Naive thymus-derived CD8-positive, alpha-beta T cell (primary cell): ENCODE measurements at regions of chr1 and their contacts with region 1.

Region 1: GRCh38 chr1:9629445-9630201 is 21.9 kb upstream of the PIK3CD start:
- DNase-seq: peak; percentile 66 to 89 (median 80)
- ATAC-seq: peak; percentile 45 to 58
- H3K4me3 Mint-ChIP-seq: peak overlapping the region; percentile 90 to 100 (median 96)
- H3K27ac Mint-ChIP-seq: peak overlapping the region; percentile 91 to 100 (median 97)
- H3K4me1 Mint-ChIP-seq: peaks cover 25 to 78% (median 60%) of the 10 kb centered on the region in 4 donors
- H3K27me3 Mint-ChIP-seq: no peaks in the 10 kb centered on the region

Region 2: GRCh38 chr1:9606948-9607347 is 22.7 kb before region 1 on chr1:
- POLR2A ChIA-PET with region 1: no interaction called
- DNase-seq: no peak
- ATAC-seq: no peak
- H3K4me3 Mint-ChIP-seq: no peak overlapping the region
- H3K27ac Mint-ChIP-seq: no peak overlapping the region
- H3K4me1 Mint-ChIP-seq: no peaks in the 10 kb centered on the region
- H3K27me3 Mint-ChIP-seq: no peaks in the 10 kb centered on the region

Region 3: GRCh38 chr1:9651565-9652378 is 22.1 kb after region 1 on chr1 and contains the start of gene PIK3CD:
- POLR2A ChIA-PET with region 1: interaction called, 1,921 read pairs
- DNase-seq: peak in 8 of 10 donors; percentile 23 to 52 (median 36)
- ATAC-seq: peak; percentile 24 to 44
- H3K4me3 Mint-ChIP-seq: peak within 1 kb of the TSS; percentile 95 to 100 (median 100)
- H3K27ac Mint-ChIP-seq: peak within 1 kb of the TSS; percentile 97 to 100 (median 99)
- H3K4me1 Mint-ChIP-seq: peaks cover 24 to 82% (median 79%) of the 10 kb centered on the region in 4 donors
- H3K27me3 Mint-ChIP-seq: no peaks in the 10 kb centered on the region
- polyA plus RNA-seq, gene PIK3CD: 56.8 to 166 (median 87.4) TPM

Region 4: DNA sequence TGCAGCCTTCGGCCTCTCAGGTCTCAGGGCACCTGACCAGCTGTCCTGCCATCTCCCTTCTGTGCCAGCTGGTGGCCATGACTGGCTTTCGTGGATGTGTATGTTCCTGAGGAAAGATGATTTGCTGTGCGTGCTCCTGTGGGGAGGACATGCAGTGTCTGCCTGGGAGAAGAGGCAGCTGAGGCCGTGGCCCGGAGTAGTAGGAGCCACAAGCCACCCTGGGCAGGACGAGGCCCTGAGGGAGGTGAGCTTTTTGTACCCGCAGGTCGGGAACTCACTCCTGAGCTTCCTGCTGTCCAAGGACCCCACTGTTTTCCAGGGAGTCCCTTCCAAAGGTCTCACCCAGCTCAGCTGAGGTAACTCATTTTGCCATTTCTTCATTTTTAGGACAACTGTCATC is 80.4 kb after region 1 on chr1:
- POLR2A ChIA-PET with region 1: interaction called, 1,172 read pairs
- DNase-seq: no peak
- ATAC-seq: no peak
- H3K4me3 Mint-ChIP-seq: peak overlapping the region in 5 of 10 donors; percentile 5 to 77 (median 45)
- H3K27ac Mint-ChIP-seq: peak overlapping the region; percentile 49 to 91 (median 86)
- H3K4me1 Mint-ChIP-seq: peaks cover 16 to 77% (median 69%) of the 10 kb centered on the region in 4 donors
- H3K27me3 Mint-ChIP-seq: no peaks in the 10 kb centered on the region

Region 5: DNA sequence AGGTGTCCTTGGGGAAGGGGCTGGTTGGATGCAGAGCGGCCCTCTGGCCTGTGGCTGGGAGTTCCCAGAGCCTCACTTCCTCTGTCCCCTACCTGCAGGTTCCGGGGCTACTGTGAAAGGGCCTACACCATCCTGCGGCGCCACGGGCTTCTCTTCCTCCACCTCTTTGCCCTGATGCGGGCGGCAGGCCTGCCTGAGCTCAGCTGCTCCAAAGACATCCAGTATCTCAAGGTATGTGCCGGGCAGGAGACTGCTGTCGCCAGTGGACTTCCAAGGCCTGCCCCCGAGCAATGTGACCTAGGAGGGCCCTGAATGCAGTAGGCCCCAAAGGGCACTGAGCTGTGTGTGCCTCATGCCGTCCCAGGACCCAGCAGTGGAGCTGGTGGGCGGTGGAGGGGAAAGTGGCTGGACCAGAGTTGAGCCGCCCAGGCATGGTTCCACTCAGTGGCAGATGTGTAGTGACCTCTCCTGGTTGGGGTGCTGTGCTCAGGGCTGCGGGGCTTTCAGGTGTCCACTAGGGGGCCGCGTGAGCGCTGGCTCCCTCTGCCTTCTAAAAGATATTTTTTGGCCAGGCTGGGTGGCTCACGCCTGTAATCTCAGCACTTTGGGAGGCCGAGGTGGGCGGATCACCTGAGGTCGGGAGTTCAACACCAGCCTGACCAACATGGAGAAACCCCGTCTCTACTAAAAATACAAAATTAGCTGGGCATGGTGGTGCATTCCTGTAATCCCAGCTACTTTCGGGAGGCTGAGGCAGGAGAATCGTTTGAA is 95.3 kb after region 1 on chr1:
- POLR2A ChIA-PET with region 1: interaction called, 1,172 read pairs
- DNase-seq: peak; percentile 49 to 82 (median 68)
- ATAC-seq: peak; percentile 13 to 16
- H3K4me3 Mint-ChIP-seq: peak overlapping the region in 7 of 10 donors; percentile 10 to 83 (median 53)
- H3K27ac Mint-ChIP-seq: peak overlapping the region; percentile 62 to 92 (median 84)
- H3K4me1 Mint-ChIP-seq: peaks cover 27 to 85% (median 71%) of the 10 kb centered on the region in 4 donors
- H3K27me3 Mint-ChIP-seq: no peaks in the 10 kb centered on the region

Region 6: DNA sequence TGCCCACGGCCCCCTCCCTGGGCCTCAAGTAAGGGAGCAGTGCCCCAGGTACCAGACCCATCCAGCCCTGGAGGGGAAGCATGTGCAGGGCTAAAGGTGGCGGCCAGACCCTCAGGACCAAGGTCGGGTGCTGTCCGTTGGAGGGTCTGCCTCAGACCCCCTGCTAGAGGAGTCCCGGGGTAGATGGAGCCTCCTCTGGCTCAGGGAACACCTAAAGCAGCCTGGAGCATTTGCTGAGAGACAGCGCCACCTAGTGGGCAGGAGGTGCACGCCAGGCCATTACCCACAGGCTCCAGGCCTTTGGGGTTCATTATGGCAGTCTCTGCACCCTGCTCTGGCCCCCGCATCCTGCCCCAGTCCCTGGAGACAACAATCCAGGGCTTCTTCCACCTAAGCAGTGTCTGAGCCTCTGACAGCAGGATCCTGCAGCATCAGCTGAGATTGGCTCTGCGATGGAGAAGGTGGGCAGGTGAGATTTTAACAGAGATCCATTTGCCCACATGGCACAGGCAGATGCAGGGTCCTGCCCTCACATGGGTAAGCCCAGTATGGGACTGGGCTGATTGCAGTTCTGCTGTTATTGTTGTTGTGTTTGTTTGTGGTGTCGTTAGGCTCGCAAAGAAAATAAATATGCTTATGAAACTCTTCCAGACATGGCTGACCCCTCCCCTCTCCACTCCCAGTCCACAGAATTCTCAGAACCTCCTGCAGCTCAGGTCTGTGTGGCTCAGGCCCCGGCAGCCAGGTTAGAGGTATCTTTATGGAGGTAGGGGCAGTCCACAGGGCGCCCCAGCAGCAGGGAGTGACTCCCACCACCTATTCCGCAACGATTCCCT is 238.0 kb after region 1 on chr1:
- POLR2A ChIA-PET with region 1: interaction called, 11 read pairs
- DNase-seq: peak; percentile 72 to 92 (median 86)
- ATAC-seq: peak; percentile 99 to 100
- H3K4me3 Mint-ChIP-seq: no peak overlapping the region
- H3K27ac Mint-ChIP-seq: peak overlapping the region in 3 of 10 donors; percentile 27 to 86 (median 34)
- H3K4me1 Mint-ChIP-seq: peaks cover 2 to 10% (median 3%) of the 10 kb centered on the region in 4 donors
- H3K27me3 Mint-ChIP-seq: no peaks in the 10 kb centered on the region